ENCODE measurements at regions of chr21 and their contacts with region 1.

Region 1: DNA sequence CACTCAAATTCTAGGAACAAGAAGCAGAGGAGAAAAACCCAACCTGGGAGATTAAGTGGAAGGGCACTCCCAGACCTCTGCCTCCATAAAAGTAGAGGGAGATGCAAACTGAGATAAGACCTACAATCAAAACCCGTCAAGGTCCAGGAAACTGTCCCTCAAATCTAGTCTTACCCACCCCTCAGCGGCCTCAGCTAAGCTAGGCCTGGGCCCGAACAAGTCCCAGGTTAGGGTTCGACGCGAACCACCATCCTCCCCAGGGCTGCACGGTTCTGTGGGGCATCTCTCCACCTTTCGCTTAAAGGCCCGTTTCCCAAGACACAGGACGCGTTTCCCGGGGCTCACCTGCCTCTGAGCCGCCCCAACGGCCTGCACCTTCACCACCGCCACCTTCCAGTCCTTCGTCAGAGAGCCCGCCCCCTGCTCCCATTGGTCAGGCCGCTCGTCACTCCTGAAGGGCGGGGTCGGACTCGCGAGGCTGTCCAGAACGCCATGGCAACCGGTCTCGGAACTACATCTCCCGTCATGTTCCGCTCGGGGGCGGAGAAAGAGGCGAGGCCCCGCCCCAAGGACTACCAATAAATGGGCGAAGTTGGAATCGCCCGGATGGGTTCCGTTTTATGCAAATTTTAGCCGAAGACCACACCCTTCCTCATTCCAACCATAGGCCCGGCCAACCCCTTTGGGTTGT is at the start of gene CRYZL1:
- DNase-seq: peak; percentile 100
- ATAC-seq: peak; percentile 94
- H3K4me3 ChIP-seq: peak within 1 kb of the TSS; percentile 92
- H3K27ac ChIP-seq: peak within 1 kb of the TSS; percentile 91
- H3K4me1 ChIP-seq: peaks cover 3% of the 10 kb centered on the region
- H3K27me3 ChIP-seq: no peaks in the 10 kb centered on the region
- total RNA-seq, gene CRYZL1: 25.0 to 37.5 (median 32.3) TPM

Region 2: DNA sequence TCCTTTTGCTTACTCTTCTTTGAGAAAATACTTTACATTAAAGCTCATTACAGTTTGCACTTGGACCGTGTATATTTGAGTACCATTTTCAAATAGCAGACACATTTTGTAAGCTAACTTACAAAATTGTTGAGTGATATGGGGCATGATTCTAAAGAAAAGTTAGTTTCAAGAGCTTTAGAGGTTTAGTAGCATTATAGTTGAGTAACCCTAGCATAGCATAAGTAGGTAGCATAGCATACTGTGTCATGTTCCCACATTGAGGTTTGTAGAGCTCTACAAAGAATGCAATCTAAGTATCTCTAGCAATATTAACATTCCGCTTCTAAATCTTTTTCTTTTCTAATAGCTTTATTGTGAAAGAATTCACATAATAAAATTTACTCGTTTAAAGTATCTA is 92.8 kb after region 1 on chr21:
- intact Hi-C with region 1: loop called in 1 of 4 experiments (anchors 10 kb)
- DNase-seq: no peak
- ATAC-seq: no peak
- H3K4me3 ChIP-seq: no peak overlapping the region
- H3K27ac ChIP-seq: no peak overlapping the region
- H3K4me1 ChIP-seq: no peaks in the 10 kb centered on the region
- H3K27me3 ChIP-seq: no peaks in the 10 kb centered on the region

Region 3: DNA sequence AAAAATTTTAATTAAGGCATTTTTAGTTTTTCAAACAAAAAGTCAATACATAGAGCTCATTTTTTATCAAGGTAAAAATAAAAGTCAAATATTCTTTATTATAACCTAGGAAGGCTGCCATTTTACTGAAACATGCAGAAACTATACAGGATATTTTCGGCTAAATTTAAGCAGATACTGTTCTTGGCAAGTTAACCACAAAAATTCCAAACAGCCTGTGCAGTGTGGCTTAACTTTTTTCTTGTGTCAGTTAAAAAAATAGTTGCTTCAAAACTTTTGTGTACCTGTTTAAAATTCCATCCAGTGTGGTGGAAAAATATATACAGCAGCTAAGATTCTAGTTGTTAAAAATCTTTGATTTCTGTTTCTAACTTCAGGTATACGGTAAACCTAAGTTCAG is 139.2 kb after region 1 on chr21:
- intact Hi-C with region 1: no loop called
- DNase-seq: no peak
- ATAC-seq: no peak
- H3K4me3 ChIP-seq: no peak overlapping the region
- H3K27ac ChIP-seq: no peak overlapping the region
- H3K4me1 ChIP-seq: no peaks in the 10 kb centered on the region
- H3K27me3 ChIP-seq: no peaks in the 10 kb centered on the region

Region 4: GRCh38 chr21:33894736-33895288 is 253.3 kb after region 1 on chr21:
- intact Hi-C with region 1: loop called (anchors 5 to 10 kb)
- DNase-seq: peak; percentile 81 to 93 (median 90)
- ATAC-seq: peak; percentile 93 to 94
- H3K4me3 ChIP-seq: peak overlapping the region; percentile 39
- H3K27ac ChIP-seq: no peak overlapping the region
- H3K4me1 ChIP-seq: peaks cover 2% of the 10 kb centered on the region
- H3K27me3 ChIP-seq: no peaks in the 10 kb centered on the region